ENCODE measurements at regions of chr1 and their contacts with region 1.

Region 1: DNA sequence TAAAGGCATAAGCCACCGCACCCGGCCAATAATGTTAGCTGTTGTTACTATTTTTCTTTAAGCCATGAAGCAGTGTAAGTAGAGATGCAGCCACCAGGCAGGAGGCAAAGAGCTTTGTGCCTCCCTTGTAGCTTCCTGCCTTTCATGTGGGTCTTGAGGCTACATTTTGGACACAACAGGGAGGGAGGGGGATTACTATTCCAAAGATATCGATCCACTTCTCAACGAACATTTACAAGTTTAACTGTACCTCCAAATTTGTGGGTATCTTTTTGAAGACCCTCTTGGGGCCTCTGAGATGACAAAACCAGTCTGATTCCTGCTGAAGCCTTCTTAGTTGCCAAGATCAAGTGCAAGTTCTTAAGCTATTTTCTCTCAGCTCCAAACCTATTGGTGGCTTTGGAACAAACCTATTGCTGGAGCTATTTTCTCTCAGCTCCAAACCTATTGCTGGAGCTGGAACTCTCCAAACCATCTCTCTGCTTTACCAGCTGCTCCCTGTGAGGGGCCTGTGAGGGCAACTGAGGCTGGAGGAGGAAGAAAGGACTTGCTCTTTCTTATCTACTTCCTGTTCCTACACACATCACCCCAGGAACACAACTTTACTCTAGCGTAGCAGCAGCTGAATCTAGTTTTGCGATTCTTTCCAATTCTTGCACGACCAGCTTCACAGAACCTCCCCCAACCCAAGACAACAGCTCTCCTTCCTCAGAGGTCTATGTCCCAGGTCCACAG is 16.1 kb upstream of the RCAN3 start:
- DNase-seq: no peak
- H3K4me3 Mint-ChIP-seq: peak overlapping the region; percentile 36
- H3K27ac Mint-ChIP-seq: peak overlapping the region; percentile 82
- H3K4me1 Mint-ChIP-seq: peaks cover 59% of the 10 kb centered on the region
- H3K27me3 Mint-ChIP-seq: no peaks in the 10 kb centered on the region

Region 2: GRCh38 chr1:24526940-24527542 is 40.5 kb after region 1 on chr1:
- CTCF ChIA-PET with region 1: interaction called, 11 read pairs
- POLR2A ChIA-PET with region 1: interaction called, 3 read pairs
- DNase-seq: peak; percentile 57
- H3K4me3 Mint-ChIP-seq: no peak overlapping the region
- H3K27ac Mint-ChIP-seq: peak overlapping the region; percentile 14
- H3K4me1 Mint-ChIP-seq: peaks cover 25% of the 10 kb centered on the region
- H3K27me3 Mint-ChIP-seq: no peaks in the 10 kb centered on the region

Measured in activated CD4-positive, alpha-beta memory T cell treated with anti-CD3 and anti-CD28 coated beads, Interleukin-2, amount 10 ng/mL, durations not matched to agents 7 days and 5 days (primary cell).